ENCODE measurements at regions of chr6 and their contacts with region 1.

Region 1: GRCh38 chr6:152277826-152278329 is 359.3 kb downstream of the SYNE1 start:
- DNase-seq: peak in 1 of 4 donors; percentile 51
- ATAC-seq: peak; percentile 29
- H3K4me3 ChIP-seq: no peak overlapping the region
- H3K27ac ChIP-seq: no peak overlapping the region
- H3K4me1 ChIP-seq: peaks cover 0 to under 1% of the 10 kb centered on the region in 2 donors
- H3K27me3 ChIP-seq: no peaks in the 10 kb centered on the region
- CTCF ChIP-seq: no peak

Region 2: GRCh38 chr6:152206072-152206818 is 71.6 kb before region 1 on chr6:
- intact Hi-C with region 1: loop called in 1 of 2 experiments (anchors 5 kb)
- DNase-seq: no peak
- ATAC-seq: no peak
- H3K4me3 ChIP-seq: no peak overlapping the region
- H3K27ac ChIP-seq: no peak overlapping the region
- H3K4me1 ChIP-seq: no peaks in the 10 kb centered on the region
- H3K27me3 ChIP-seq: no peaks in the 10 kb centered on the region
- CTCF ChIP-seq: peak; percentile 24 to 25

Region 3: GRCh38 chr6:152648105-152648504 is 370.2 kb after region 1 on chr6:
- intact Hi-C with region 1: no loop called
- DNase-seq: peak in 2 of 4 donors; percentile 25 to 46
- ATAC-seq: no peak
- H3K4me3 ChIP-seq: no peak overlapping the region
- H3K27ac ChIP-seq: no peak overlapping the region
- H3K4me1 ChIP-seq: no peaks in the 10 kb centered on the region
- H3K27me3 ChIP-seq: no peaks in the 10 kb centered on the region
- CTCF ChIP-seq: no peak